GM12878 (cell line): ENCODE measurements at regions of chr1 and their contacts with region 1.

Region 1: DNA sequence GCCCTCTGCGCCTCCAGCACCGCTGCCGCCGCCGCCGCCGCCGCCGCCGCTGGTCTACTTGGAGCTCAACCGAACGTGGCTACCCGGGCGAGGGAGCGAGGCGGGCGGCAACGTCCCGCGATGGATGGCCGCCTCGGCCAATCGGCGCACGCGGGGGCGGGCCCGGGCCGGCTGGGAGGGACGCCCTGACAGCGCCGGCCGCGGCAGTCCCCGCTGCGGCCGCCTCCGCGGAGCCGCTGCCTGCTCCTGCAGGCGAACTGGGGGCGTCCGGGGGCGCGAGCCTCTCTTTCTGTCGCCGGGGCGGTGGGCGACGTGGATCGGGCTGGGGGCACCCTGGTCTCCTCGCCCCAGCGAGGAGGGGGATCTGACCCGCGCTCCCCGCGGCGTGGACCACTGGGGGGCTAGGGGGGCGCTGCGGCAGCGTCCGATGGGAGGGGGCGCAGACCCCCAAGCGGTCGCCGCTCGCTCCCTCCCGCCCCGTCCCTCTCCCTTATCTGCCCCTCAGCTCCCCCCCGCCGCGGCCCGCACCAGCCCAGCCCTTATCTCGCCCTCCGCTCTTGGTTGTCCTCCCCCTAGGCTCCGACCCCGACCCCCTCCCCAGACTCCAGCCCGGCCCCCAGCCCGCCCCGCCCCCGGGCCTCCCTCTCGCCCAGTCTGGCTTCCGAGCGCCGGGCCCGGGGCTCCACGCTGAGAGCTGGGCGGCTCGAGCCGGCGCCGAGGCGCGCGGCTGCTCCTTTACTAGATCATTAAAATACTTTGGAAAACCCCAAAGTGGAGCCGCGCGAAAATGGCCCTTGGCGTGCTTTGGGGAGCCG is at the start of gene SSBP3:
- DNase-seq: peak; percentile 60
- ATAC-seq: peak; percentile 90
- H3K4me3 ChIP-seq: peak within 1 kb of the TSS; percentile 96
- H3K27ac ChIP-seq: peak within 1 kb of the TSS; percentile 84
- H3K4me1 ChIP-seq: peaks cover 38% of the 10 kb centered on the region
- H3K27me3 ChIP-seq: no peaks in the 10 kb centered on the region
- CTCF ChIP-seq: no peak
- EP300 ChIP-seq: no peak
- POLR2A ChIP-seq: peak; percentile 85
- RAD21 ChIP-seq: no peak
- polyA plus RNA-seq, gene SSBP3: 4.1 to 7.9 TPM

Region 2: DNA sequence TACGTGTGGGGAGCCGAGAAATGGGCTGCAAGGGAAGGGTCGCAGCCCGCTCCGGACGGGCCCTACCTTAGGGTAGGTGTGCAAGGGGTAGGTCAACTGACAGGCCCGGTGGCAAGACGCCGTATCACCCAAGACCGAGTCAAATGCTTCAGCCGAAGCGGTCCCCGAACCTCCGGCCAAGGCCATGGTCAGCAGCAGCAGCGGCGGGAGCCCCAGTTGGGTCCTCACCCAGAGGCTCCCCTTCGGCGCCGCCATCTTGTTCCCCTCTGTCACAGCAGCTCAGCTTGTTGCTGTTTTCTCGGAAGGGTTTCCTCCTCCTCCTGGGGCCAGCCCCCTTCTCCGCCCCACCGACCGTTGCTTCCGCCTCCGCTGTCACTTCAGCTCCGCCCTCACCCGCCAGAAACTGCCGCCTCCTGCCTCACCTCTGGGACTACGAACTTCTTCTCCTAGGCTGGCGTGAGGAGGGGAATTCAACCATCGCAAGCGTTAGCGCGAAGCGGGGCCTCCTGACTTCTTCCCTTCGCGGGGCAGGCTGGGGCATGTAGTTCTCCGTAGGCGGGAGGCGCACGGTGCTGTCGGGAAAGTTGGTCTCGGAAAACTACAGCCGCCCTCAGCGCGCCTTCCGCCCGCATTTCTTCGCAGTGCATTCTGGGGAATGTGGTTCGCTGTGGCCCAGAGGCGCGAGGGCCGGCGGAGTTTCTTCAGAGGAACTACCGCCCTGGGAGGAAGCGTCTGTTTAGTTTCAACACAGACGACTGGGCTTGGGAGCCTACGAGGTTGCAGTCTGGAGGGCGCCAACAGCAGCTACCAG is 353.4 kb before region 1 on chr1 and contains the starts of genes TCEANC2 and TMEM59:
- CTCF ChIA-PET with region 1: no interaction called
- POLR2A ChIA-PET with region 1: interaction called, 3 read pairs
- RAD21 ChIA-PET with region 1: no interaction called
- SMC1A ChIA-PET with region 1: no interaction called
- in situ Hi-C with region 1: no loop called
- intact Hi-C with region 1: loop called (anchors 2 kb)
- DNase-seq: peak; percentile 99
- ATAC-seq: peak; percentile 95
- H3K4me3 ChIP-seq: peak within 1 kb of the TSS; percentile 92
- H3K27ac ChIP-seq: peak within 1 kb of the TSS; percentile 88
- H3K4me1 ChIP-seq: peaks cover 6% of the 10 kb centered on the region
- H3K27me3 ChIP-seq: no peaks in the 10 kb centered on the region
- CTCF ChIP-seq: no peak
- EP300 ChIP-seq: no peak
- POLR2A ChIP-seq: peak; percentile 75
- RAD21 ChIP-seq: no peak
- polyA plus RNA-seq, gene TCEANC2: 5.4 to 10.5 TPM
- polyA plus RNA-seq, gene TMEM59: 112 to 128 TPM

Region 3: GRCh38 chr1:54273092-54273794 is 133.3 kb before region 1 on chr1:
- CTCF ChIA-PET with region 1: interaction called, 6 read pairs
- POLR2A ChIA-PET with region 1: interaction called, 6 read pairs
- RAD21 ChIA-PET with region 1: interaction called, 16 read pairs
- SMC1A ChIA-PET with region 1: interaction called, 7 read pairs
- in situ Hi-C with region 1: no loop called
- intact Hi-C with region 1: loop called (anchors 5 kb)
- DNase-seq: peak; percentile 19
- ATAC-seq: peak; percentile 96
- H3K4me3 ChIP-seq: no peak overlapping the region
- H3K27ac ChIP-seq: no peak overlapping the region
- H3K4me1 ChIP-seq: peaks cover 10% of the 10 kb centered on the region
- H3K27me3 ChIP-seq: no peaks in the 10 kb centered on the region
- CTCF ChIP-seq: peak in 2 of 3 experiments; percentile 62 to 64; a peak in 4 of 6 replicates
- EP300 ChIP-seq: 0 out of 4 replicates have a peak, but pooled peaks of 1 of the 2 experiments have one; percentile 42
- POLR2A ChIP-seq: no peak
- RAD21 ChIP-seq: peak; percentile 35; the same call in 1 of the 2 replicates

Region 4: DNA sequence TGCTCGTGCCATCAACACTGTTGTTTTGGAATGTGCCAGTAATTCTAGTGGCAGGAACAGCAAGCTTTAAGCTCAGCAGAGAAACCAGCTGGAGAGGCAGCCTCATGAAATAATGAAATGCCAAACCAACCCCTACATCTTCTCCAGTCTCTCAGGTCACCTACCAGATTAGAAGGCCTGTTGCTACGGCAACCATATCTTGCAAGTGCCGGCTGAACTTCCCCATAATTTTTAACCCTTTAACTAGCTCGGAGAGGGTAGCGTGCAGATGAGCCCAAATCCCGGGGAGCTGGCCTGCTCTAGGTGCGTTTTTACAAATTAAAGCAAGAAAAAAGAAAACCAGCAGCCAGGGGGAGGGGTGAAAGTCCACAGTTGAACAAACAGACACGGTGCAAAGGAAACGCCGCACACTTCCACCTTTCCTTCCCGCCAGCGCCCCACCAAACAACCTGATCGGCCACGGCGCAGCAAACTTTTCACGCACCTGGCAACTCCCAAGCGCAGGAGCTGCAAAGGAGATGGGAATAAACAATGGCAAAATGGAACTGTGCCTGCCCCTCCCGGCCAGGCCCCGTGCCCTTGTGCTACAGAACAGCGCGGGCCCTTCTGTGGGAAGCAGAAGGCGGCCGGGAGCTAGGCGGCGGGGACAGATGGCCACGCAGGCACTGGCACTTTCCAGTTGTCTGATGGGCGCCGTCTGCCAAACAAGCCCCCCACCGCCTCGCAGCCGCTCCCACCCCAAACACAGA is 50.4 kb before region 1 on chr1:
- CTCF ChIA-PET with region 1: interaction called, 6 read pairs
- POLR2A ChIA-PET with region 1: interaction called, 13 read pairs
- RAD21 ChIA-PET with region 1: interaction called, 13 read pairs
- SMC1A ChIA-PET with region 1: interaction called, 9 read pairs
- in situ Hi-C with region 1: no loop called
- intact Hi-C with region 1: loop called (anchors 5 kb)
- DNase-seq: no peak
- ATAC-seq: peak; percentile 63
- H3K4me3 ChIP-seq: peak overlapping the region; percentile 34
- H3K27ac ChIP-seq: peak overlapping the region; percentile 66
- H3K4me1 ChIP-seq: peaks cover 20% of the 10 kb centered on the region
- H3K27me3 ChIP-seq: no peaks in the 10 kb centered on the region
- CTCF ChIP-seq: no peak
- EP300 ChIP-seq: no peak
- POLR2A ChIP-seq: no peak
- RAD21 ChIP-seq: no peak

Region 5: DNA sequence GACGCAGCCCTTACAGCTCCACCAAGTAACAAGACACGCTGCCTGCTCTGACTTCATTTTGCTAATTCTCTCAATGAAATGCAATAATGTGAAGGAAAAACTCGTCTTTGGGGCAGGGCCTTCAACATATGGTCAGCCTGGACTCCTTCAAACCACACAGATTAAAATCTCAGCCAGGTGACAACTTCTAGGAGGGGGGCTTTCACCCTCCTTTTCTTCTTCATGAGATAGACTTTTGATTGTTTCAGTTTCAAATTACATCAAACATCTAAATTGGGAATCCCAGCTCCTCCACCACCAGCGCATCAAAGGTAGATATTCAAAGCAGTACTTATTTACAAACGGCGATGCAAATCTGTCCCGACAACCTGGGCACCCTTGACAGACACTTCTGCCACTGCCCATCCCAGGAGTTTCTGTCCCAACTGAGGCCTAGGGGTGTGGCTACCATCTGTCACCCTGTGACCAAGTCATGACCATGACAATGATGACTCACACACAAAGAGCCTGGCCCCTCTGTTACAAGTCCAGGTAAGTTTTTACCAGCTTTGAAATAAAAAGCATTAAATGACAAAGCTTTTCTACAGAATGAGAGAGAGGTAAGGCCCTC is 30.0 kb before region 1 on chr1:
- CTCF ChIA-PET with region 1: interaction called, 3 read pairs
- POLR2A ChIA-PET with region 1: interaction called, 7 read pairs
- RAD21 ChIA-PET with region 1: interaction called, 25 read pairs
- SMC1A ChIA-PET with region 1: interaction called, 15 read pairs
- in situ Hi-C with region 1: no loop called
- intact Hi-C with region 1: loop called (anchors 2 kb)
- DNase-seq: peak; percentile 84
- ATAC-seq: peak; percentile 67
- H3K4me3 ChIP-seq: peak overlapping the region; percentile 58
- H3K27ac ChIP-seq: peak overlapping the region; percentile 93
- H3K4me1 ChIP-seq: peaks cover 89% of the 10 kb centered on the region
- H3K27me3 ChIP-seq: no peaks in the 10 kb centered on the region
- CTCF ChIP-seq: no peak
- EP300 ChIP-seq: peak; percentile 71 to 76; a peak in 2 of 4 replicates
- POLR2A ChIP-seq: no peak
- RAD21 ChIP-seq: no peak

Region 6: GRCh38 chr1:54624466-54625464 is 218.2 kb after region 1 on chr1:
- CTCF ChIA-PET with region 1: no interaction called
- POLR2A ChIA-PET with region 1: no interaction called
- RAD21 ChIA-PET with region 1: no interaction called
- SMC1A ChIA-PET with region 1: no interaction called
- in situ Hi-C with region 1: no loop called
- intact Hi-C with region 1: no loop called
- DNase-seq: no peak
- ATAC-seq: no peak
- H3K4me3 ChIP-seq: no peak overlapping the region
- H3K27ac ChIP-seq: no peak overlapping the region
- H3K4me1 ChIP-seq: peaks cover 10% of the 10 kb centered on the region
- H3K27me3 ChIP-seq: no peaks in the 10 kb centered on the region
- CTCF ChIP-seq: no peak
- EP300 ChIP-seq: no peak
- POLR2A ChIP-seq: no peak
- RAD21 ChIP-seq: no peak